Mammary epithelial cell (primary cell): ENCODE measurements at regions of chr19 and their contacts with region 1.

Region 1: DNA sequence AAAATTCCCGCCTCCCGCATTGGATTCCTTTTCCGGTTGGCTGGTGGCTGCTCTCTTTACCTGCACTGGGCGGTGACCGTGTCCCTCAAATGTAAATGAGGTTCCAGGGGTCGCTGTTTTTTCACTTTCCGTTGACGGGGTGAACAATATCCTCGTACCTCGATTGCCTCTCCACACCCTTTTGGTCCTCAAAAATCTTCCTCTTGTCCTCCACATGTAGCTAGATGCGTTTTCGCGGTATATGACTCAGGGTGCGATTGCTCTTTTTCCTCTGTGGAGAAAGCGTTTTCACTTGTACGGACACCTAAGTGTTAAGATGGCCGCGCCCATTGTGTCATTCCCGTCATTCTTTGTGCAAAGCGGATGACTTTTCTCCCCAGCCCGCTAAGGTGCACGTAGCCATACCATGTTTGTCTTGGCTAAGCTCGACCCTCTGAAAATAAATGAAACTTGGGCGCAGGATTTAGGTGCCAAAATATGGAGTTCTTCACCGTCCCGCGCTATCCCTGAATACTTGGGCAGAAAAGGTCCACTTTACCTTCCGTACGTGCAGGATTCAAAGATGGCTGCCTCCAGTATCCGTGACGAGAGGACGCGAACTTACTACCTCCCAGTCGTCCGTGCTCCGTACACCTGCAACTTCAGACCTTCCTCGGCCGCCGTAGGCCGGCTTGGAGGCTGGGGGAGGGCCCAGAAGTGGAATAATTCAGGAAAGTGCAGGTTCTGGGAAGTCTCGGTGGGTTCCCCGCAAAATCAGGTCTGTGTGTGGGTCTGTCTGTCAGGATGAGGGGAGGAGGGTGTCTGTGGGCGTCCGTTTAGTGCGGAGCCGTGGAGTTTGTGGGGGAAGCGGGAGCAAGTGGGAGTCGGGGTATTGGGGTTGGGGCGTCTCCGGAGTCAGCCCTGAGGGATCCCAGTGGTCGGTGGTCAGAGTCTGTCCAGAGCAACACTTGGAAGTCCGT is at the start of gene ZNF613:
- DNase-seq: peak; percentile 92
- H3K4me3 ChIP-seq: peak within 1 kb of the TSS; percentile 53 to 93 (median 78)
- H3K27ac ChIP-seq: peak within 1 kb of the TSS; percentile 65
- H3K4me1 ChIP-seq: no peaks in the 10 kb centered on the region
- H3K27me3 ChIP-seq: no peaks in the 10 kb centered on the region
- CTCF ChIP-seq: peak in 1 of 2 donors; percentile 41
- total RNA-seq, gene ZNF613: 6.0 to 6.6 TPM

Region 2: DNA sequence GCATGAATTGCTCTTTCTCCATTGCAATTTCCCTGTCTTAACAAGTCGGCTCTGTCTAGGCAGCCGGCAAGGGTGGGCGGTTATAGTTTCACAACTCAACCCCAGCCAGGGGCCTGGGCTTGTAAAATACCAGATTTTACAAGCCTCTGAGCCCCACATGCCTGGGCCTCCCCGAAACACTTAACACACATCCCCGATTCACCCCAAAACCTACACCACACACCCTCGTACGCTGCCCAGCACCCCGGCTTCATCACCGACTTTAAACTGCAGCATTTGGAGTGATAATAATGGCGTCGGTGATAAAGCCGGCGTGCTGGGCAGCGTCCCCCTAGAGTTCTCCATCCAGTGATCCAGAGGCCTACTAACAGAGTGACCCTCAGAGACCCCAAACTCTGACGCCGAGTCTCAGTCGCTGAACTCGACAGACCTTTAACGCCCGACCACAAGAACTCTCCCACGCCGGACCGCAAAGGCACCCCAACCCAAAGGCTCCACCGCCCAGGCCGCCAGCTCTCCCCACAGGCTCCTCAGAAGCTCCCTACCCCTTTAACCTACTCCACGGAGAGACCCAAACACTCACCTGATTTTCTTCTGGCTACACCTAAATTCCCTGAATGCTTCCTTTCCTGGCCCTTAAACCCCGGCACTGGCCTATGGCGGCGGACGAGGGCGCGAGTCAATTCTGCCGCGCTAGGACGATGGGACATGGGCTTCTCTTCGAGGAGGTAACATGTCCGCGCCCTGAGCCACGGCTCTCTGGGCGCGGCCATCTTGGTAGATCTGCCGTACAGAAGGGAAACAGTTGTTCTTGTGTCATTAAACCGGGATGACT is 22.5 kb before region 1 on chr19 and contains the start of gene ZNF649:
- CTCF ChIA-PET with region 1: no interaction called
- dilution Hi-C with region 1: no loop called
- in situ Hi-C with region 1: no loop called
- intact Hi-C with region 1: loop called (anchors 1 kb)
- DNase-seq: peak; percentile 85
- H3K4me3 ChIP-seq: peak within 1 kb of the TSS; percentile 84 to 89 (median 88)
- H3K27ac ChIP-seq: peak within 1 kb of the TSS; percentile 64
- H3K4me1 ChIP-seq: no peaks in the 10 kb centered on the region
- H3K27me3 ChIP-seq: no peaks in the 10 kb centered on the region
- CTCF ChIP-seq: no peak
- total RNA-seq, gene ZNF649: 10.2 to 18.7 TPM

Region 3: DNA sequence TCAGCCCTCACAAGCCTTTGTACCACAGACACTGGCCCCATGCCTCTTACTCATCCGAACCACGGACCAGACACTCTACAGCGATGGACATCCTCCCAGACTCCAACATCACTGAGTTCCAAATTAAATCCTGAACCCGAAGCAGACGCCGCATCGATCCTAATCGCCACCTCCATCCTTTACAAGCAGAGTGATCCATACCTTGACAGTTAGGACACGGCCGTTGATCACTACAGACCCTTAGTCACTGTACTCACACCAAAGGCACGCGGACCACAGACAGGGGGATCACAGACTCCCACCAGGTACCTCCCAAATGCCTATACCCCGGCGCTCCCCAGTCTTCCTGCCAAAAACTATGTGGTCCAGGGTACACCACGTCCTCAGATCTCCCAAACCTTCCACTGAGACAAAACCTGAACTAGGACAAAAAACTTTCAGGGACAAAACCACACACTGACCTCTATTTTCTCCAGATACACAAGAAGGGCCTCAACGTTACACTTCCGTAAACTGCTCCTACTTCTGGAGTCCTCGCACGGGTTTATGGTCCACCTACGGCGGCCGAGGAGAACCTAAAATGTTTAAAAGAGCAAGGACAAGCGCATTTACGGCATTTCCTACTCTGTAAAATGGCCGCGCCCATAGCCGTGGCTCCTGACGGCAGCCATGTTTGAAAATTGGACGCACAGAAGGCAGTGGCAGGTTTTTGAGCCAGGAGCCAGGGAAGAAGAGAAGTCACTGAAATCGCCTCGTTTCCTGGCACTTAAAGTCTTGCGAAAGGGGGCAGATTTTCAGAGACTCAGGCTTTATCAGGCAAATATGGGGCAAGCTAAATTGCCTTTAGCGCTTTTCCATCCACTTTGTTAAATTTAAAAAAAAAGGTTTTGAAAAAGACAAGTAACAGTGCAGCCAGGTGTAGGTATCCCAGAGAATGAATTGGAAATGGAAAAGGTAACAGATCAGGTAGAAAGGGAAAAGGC is 59.5 kb after region 1 on chr19 and contains the start of gene ZNF350:
- CTCF ChIA-PET with region 1: no interaction called
- dilution Hi-C with region 1: no loop called
- in situ Hi-C with region 1: no loop called
- intact Hi-C with region 1: loop called (anchors 2 kb)
- DNase-seq: peak; percentile 93
- H3K4me3 ChIP-seq: peak within 1 kb of the TSS; percentile 69 to 84 (median 84)
- H3K27ac ChIP-seq: peak within 1 kb of the TSS; percentile 64
- H3K4me1 ChIP-seq: peaks cover 3% of the 10 kb centered on the region
- H3K27me3 ChIP-seq: no peaks in the 10 kb centered on the region
- CTCF ChIP-seq: no peak
- total RNA-seq, gene ZNF350: 7.7 to 8.8 TPM

Region 4: DNA sequence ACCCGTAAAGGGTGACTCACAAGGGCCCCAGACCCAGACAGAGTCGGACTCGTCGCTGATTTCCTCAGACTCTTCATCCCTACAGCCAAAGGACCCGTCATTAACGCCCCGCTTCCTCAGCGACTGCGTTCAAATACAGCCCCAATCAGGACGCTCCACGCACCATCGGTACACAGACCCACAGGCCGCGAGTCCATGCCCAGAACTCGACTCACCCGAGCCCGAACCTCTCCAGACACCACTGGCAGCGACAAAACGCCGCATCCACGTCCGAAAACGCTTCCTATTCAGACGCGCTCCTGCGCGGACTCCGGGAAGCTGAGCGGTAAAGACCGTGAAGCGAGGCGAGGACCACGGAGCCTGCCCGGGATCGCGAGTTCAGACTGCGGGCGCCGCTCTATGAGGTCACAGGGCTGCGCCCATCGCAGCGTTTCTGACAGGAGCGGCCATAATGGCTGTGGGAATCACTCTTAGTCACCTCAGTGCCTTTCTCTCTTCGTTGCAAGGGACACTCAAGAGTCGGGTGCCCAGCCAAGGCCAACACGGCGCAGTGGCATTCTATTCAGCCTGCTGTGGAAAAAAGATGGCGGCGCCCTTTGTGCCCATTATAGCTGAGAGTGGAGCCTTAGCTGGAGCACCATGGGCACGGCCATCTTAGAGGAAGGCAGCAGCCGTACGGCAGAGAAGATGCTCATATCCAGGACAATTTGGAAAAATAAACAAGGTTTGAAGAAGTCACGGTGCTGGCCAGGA is 101.1 kb after region 1 on chr19 and contains the start of gene ZNF614:
- CTCF ChIA-PET with region 1: no interaction called
- dilution Hi-C with region 1: no loop called
- in situ Hi-C with region 1: no loop called
- intact Hi-C with region 1: loop called (anchors 5 kb)
- DNase-seq: peak; percentile 88
- H3K4me3 ChIP-seq: peak within 1 kb of the TSS; percentile 73 to 93 (median 84)
- H3K27ac ChIP-seq: peak within 1 kb of the TSS; percentile 85
- H3K4me1 ChIP-seq: no peaks in the 10 kb centered on the region
- H3K27me3 ChIP-seq: no peaks in the 10 kb centered on the region
- CTCF ChIP-seq: no peak
- total RNA-seq, gene ZNF614: 8.7 to 9.1 TPM

Region 5: GRCh38 chr19:52048555-52049501 is 121.8 kb after region 1 on chr19 and contains the start of gene ZNF432:
- CTCF ChIA-PET with region 1: no interaction called
- dilution Hi-C with region 1: no loop called
- in situ Hi-C with region 1: no loop called
- intact Hi-C with region 1: loop called (anchors 1 kb)
- DNase-seq: peak; percentile 89
- H3K4me3 ChIP-seq: peak within 1 kb of the TSS; percentile 65 to 70 (median 67)
- H3K27ac ChIP-seq: peak within 1 kb of the TSS; percentile 83
- H3K4me1 ChIP-seq: no peaks in the 10 kb centered on the region
- H3K27me3 ChIP-seq: no peaks in the 10 kb centered on the region
- CTCF ChIP-seq: no peak
- total RNA-seq, gene ZNF432: 9.3 to 26.5 TPM

Region 6: GRCh38 chr19:52070476-52070875 is 143.4 kb after region 1 on chr19:
- CTCF ChIA-PET with region 1: no interaction called
- dilution Hi-C with region 1: no loop called
- in situ Hi-C with region 1: no loop called
- intact Hi-C with region 1: no loop called
- DNase-seq: peak; percentile 3
- H3K4me3 ChIP-seq: no peak overlapping the region
- H3K27ac ChIP-seq: no peak overlapping the region
- H3K4me1 ChIP-seq: no peaks in the 10 kb centered on the region
- H3K27me3 ChIP-seq: no peaks in the 10 kb centered on the region
- CTCF ChIP-seq: no peak